ENCODE measurements at regions of chr4 and their contacts with region 1.

Region 1: DNA sequence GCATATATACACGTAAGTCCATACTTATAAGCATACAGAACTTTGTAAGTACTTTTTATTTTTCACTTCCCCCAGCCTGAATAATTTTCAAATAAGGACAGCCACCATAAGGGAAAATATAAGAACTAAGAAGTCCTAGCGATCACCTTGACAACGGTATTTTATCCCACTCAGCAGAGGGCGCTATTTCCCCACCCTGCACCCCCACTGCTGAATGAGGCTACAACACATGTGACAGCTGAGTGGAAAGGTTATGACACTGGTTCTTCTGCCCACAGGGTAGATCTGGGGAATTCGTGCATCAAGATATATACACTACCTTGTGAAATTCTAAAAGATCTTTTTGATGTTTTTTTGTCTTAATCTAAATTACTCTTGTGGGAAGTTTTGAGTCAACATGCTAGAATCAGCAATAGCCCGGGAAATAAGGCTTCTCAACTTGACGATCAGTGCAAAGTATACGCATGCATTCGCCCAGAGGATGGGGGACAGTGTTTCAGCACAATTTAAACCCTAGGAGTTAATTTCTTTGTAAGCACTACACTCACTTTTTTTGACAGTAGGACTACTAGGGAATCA is 151.5 kb downstream of the CORIN start:
- DNase-seq: peak; percentile 35 to 77 (median 48)
- ATAC-seq: peak; percentile 74
- H3K4me3 ChIP-seq: no peak overlapping the region
- H3K4me3 Mint-ChIP-seq: no peak overlapping the region
- H3K27ac ChIP-seq: no peak overlapping the region
- H3K27ac Mint-ChIP-seq: no peak overlapping the region
- H3K4me1 ChIP-seq: no peaks in the 10 kb centered on the region
- H3K4me1 Mint-ChIP-seq: no peaks in the 10 kb centered on the region
- H3K27me3 ChIP-seq: no peaks in the 10 kb centered on the region
- H3K27me3 Mint-ChIP-seq: peaks cover 7% of the 10 kb centered on the region
- CTCF ChIP-seq: peak; percentile 71

Region 2: DNA sequence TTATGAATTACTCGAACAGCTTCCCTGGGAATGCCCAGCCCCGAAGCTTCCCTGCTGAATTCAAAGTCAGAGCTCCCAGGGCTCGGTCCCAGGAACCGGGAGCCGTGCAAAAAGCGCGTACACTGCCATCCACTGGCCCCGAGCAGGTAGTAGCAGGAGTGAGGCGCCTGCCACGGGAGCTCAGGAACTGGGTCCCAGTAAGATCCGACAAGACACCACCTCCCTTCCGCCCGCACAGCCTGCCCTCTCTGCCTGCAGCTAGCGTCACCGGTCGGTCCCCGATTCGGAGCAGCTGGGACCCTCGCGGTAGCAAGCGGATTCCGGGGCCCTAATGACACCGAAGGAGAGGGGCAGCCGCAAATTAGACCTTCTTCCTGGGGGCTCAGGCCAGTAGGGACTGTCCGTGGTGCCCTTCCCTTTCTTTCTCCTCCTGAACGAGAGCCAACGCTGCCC is 150.3 kb after region 1 on chr4:
- CTCF ChIA-PET with region 1: interaction called, 5 read pairs
- POLR2A ChIA-PET with region 1: no interaction called
- intact Hi-C with region 1: loop called in 1 of 2 experiments (anchors 1 kb)
- DNase-seq: peak; percentile 21 to 68 (median 45)
- ATAC-seq: peak; percentile 68
- H3K4me3 ChIP-seq: peak overlapping the region; percentile 74
- H3K4me3 Mint-ChIP-seq: peak overlapping the region; percentile 91
- H3K27ac ChIP-seq: no peak overlapping the region
- H3K27ac Mint-ChIP-seq: peak overlapping the region; percentile 51
- H3K4me1 ChIP-seq: peaks cover 36% of the 10 kb centered on the region
- H3K4me1 Mint-ChIP-seq: peaks cover 37% of the 10 kb centered on the region
- H3K27me3 ChIP-seq: no peaks in the 10 kb centered on the region
- H3K27me3 Mint-ChIP-seq: peaks cover 9% of the 10 kb centered on the region
- CTCF ChIP-seq: peak; percentile 39

Region 3: GRCh38 chr4:47933840-47934239 is 247.5 kb after region 1 on chr4:
- CTCF ChIA-PET with region 1: interaction called, 7 read pairs
- POLR2A ChIA-PET with region 1: no interaction called
- intact Hi-C with region 1: loop called (anchors 1 kb)
- DNase-seq: peak in 3 of 14 experiments; percentile 55 to 72 (median 68)
- ATAC-seq: peak; percentile 80
- H3K4me3 ChIP-seq: no peak overlapping the region
- H3K4me3 Mint-ChIP-seq: no peak overlapping the region
- H3K27ac ChIP-seq: no peak overlapping the region
- H3K27ac Mint-ChIP-seq: no peak overlapping the region
- H3K4me1 ChIP-seq: no peaks in the 10 kb centered on the region
- H3K4me1 Mint-ChIP-seq: peaks cover 5% of the 10 kb centered on the region
- H3K27me3 ChIP-seq: no peaks in the 10 kb centered on the region
- H3K27me3 Mint-ChIP-seq: no peaks in the 10 kb centered on the region
- CTCF ChIP-seq: peak; percentile 85

Region 4: GRCh38 chr4:48223633-48224295 is 537.4 kb after region 1 on chr4:
- CTCF ChIA-PET with region 1: no interaction called
- POLR2A ChIA-PET with region 1: no interaction called
- intact Hi-C with region 1: no loop called
- DNase-seq: no peak
- ATAC-seq: no peak
- H3K4me3 ChIP-seq: no peak overlapping the region
- H3K4me3 Mint-ChIP-seq: no peak overlapping the region
- H3K27ac ChIP-seq: no peak overlapping the region
- H3K27ac Mint-ChIP-seq: no peak overlapping the region
- H3K4me1 ChIP-seq: no peaks in the 10 kb centered on the region
- H3K4me1 Mint-ChIP-seq: no peaks in the 10 kb centered on the region
- H3K27me3 ChIP-seq: no peaks in the 10 kb centered on the region
- H3K27me3 Mint-ChIP-seq: no peaks in the 10 kb centered on the region
- CTCF ChIP-seq: no peak